ENCODE measurements at regions of chr14 and their contacts with region 1.

Region 1: DNA sequence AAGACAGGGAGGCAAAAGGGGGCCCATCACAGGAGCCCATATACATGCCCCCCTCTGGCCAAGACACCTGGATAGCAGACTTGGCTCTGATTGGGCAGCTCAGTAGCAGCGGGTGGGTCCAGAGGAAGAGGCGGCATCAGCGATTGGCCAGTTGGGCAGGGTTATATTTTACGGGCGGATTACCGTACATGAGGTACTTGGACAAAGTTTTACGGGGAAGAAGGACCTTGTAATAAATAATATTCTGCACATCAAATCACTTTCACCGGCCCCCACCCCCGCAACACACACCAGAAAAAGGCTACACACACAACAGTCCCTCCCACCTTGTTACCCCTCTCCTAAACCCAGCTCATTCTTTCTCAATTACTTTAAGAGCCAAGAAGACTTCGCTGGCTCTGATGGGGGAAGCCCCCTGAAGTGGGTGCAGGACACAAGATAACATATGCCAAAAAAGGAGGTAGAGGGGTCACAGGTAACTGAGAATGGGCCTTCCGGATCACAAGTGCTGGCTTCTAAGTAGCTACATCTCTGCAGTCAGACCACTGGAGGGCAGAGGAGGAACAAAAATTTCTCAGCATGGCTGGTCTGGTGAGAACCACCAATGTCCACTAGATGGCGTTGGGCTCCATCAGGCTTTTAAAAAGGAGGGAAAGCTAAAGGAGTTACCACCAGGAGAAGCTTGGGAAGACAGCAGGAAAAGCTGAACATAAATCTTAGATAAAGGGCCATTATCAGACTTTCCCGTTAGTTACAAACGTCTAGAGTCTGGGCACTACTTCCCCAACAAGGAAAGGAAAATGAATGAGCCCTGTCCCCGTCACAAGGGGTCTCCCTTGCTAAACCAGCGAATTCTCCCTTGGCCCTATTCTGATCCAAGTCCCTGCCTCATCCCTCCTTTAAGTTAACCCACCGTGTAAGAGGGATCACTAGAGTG is 11.4 kb upstream of the CDH24 start:
- DNase-seq: peak; percentile 86
- H3K4me3 ChIP-seq: no peak overlapping the region
- H3K27ac ChIP-seq: peak overlapping the region; percentile 39 to 55 (median 51)
- H3K4me1 ChIP-seq: peaks cover 10 to 47% (median 28%) of the 10 kb centered on the region in 4 donors
- H3K27me3 ChIP-seq: no peaks in the 10 kb centered on the region
- CTCF ChIP-seq: peak; percentile 96 to 98 (median 97)
- EP300 ChIP-seq: no peak
- POLR2A ChIP-seq: no peak

Region 2: DNA sequence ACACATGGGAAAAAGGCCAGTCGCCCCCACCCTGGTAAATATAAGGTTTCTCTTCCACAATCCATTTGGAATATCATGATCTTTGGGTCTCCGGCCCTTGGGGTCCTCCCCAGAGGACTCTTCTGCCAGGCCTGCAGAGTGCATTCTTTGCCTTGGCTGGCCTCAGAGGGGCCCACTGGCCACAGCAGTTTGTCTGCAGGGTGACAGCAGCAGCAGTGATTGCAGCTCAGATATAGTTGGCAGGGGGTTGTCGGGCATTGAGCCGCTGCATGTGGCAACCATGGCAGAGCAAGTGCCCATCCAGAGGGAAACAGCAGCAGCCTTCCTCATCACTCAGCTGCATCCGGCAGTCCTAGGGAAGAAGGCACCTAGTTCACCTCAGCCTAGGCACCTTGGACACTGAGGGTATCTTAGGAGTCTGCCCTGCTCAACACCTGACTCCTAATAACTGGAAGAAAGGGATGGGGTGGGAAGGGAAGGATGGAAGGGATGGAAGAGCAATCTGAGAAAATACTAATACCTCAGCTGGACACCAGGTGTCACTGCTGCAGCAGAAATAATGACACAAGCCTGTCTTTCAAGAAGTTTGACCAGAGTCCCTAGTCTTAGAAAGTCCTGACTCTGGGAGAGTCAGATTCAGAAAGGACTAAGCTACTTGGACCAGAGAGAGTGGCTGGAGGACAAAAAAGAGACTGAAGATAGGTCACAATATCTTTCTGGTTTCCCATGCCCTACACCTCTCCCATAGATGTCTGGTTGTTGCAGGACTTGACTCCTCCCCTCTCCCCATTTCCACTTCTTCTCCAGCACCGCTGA is 95.3 kb before region 1 on chr14:
- in situ Hi-C with region 1: loop called in 1 of 4 experiments (anchors 10 kb)
- intact Hi-C with region 1: no loop called
- DNase-seq: peak; percentile 55
- H3K4me3 ChIP-seq: no peak overlapping the region
- H3K27ac ChIP-seq: no peak overlapping the region
- H3K4me1 ChIP-seq: peaks cover 11 to 23% (median 21%) of the 10 kb centered on the region in 4 donors
- H3K27me3 ChIP-seq: no peaks in the 10 kb centered on the region
- CTCF ChIP-seq: peak; percentile 69 to 80 (median 70)
- EP300 ChIP-seq: no peak
- POLR2A ChIP-seq: no peak

Region 3: GRCh38 chr14:22986508-22987054 is 82.2 kb before region 1 on chr14:
- in situ Hi-C with region 1: loop called in 1 of 4 experiments (anchors 10 kb)
- intact Hi-C with region 1: no loop called
- DNase-seq: peak; percentile 93
- H3K4me3 ChIP-seq: no peak overlapping the region
- H3K27ac ChIP-seq: no peak overlapping the region
- H3K4me1 ChIP-seq: peaks cover 0 to 17% (median 11%) of the 10 kb centered on the region in 4 donors
- H3K27me3 ChIP-seq: peaks cover 7% of the 10 kb centered on the region
- CTCF ChIP-seq: peak; percentile 86 to 94 (median 93)
- EP300 ChIP-seq: no peak
- POLR2A ChIP-seq: no peak

Measured in transverse colon (tissue), 4 donors.